Mammary epithelial cell (primary cell): ENCODE measurements at regions of chr18 and their contacts with region 1.

Region 1: GRCh38 chr18:49486953-49487710 is at the start of gene C18orf32:
- DNase-seq: peak; percentile 96
- H3K4me3 ChIP-seq: peak within 1 kb of the TSS; percentile 67 to 77 (median 68)
- H3K27ac ChIP-seq: peak within 1 kb of the TSS; percentile 79
- H3K4me1 ChIP-seq: peaks cover 32% of the 10 kb centered on the region
- H3K27me3 ChIP-seq: no peaks in the 10 kb centered on the region
- CTCF ChIP-seq: no peak
- total RNA-seq, gene C18orf32: 17.3 to 32.2 TPM

Region 2: GRCh38 chr18:49381267-49381850 is 105.8 kb before region 1 on chr18:
- CTCF ChIA-PET with region 1: no interaction called
- dilution Hi-C with region 1: no loop called
- in situ Hi-C with region 1: no loop called
- intact Hi-C with region 1: no loop called
- DNase-seq: no peak
- H3K4me3 ChIP-seq: no peak overlapping the region
- H3K27ac ChIP-seq: no peak overlapping the region
- H3K4me1 ChIP-seq: no peaks in the 10 kb centered on the region
- H3K27me3 ChIP-seq: no peaks in the 10 kb centered on the region
- CTCF ChIP-seq: no peak

Region 3: GRCh38 chr18:49459404-49460171 is 27.5 kb before region 1 on chr18:
- CTCF ChIA-PET with region 1: no interaction called
- dilution Hi-C with region 1: no loop called
- in situ Hi-C with region 1: no loop called
- intact Hi-C with region 1: loop called (anchors 1 kb)
- DNase-seq: no peak
- H3K4me3 ChIP-seq: peak overlapping the region; percentile 84 to 95 (median 86)
- H3K27ac ChIP-seq: peak overlapping the region; percentile 62
- H3K4me1 ChIP-seq: peaks cover 10% of the 10 kb centered on the region
- H3K27me3 ChIP-seq: no peaks in the 10 kb centered on the region
- CTCF ChIP-seq: no peak